ENCODE measurements at regions of chr2 and their contacts with region 1.

Region 1: DNA sequence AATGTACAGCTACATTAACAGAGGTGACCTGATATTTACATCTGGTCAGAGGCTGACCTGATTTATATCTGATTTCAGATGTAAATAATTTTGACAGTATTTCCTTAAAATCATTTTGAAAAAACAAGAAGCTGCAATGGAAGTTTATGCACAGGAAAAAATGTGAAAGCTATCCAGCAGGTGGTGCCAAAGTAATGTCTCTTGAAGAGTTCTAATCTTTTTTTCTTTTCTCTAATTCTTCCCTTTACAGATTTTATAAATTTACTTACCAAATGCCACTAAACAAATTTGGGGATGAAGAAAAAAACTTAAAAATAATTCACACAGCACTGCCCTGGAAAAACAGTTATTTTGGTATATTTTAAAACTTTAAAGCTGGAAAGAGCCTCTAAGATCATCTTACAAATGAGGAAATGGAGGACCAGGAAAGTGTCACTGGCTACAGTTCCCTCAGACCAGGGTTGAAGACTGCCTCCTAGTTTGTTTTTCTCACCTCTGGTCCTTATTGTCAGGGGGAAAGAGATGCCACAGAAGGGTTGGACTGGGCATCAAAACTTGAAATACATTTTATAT is 16.4 kb upstream of the FBLN7 start:
- DNase-seq: peak; percentile 69
- ATAC-seq: no peak
- H3K4me3 ChIP-seq: no peak overlapping the region
- H3K27ac ChIP-seq: no peak overlapping the region
- H3K4me1 ChIP-seq: no peaks in the 10 kb centered on the region
- H3K27me3 ChIP-seq: no peaks in the 10 kb centered on the region
- CTCF ChIP-seq: peak; percentile 82

Region 2: DNA sequence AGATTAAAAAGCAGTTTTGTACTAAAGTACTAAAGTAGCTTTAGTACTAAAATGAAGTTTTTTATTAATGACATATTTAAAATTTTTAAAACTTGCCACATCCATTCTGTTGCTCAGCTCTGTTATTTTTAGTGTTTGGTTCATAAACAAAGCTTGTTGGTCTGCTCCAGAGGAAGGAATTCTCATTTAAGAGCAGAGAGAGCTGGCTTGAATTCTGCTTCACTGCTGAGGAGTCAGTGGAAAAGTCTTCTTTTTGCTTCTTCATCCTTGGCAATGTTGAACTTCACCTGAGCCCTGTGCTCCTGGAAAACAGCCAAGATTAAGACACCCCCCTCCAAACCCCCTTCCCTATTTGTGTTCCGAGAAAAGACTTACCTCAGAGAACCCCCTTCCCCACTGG is 26.1 kb before region 1 on chr2:
- CTCF ChIA-PET with region 1: no interaction called
- POLR2A ChIA-PET with region 1: no interaction called
- intact Hi-C with region 1: loop called (anchors 2 kb)
- DNase-seq: no peak
- ATAC-seq: no peak
- H3K4me3 ChIP-seq: no peak overlapping the region
- H3K27ac ChIP-seq: no peak overlapping the region
- H3K4me1 ChIP-seq: peaks cover 10% of the 10 kb centered on the region
- H3K27me3 ChIP-seq: no peaks in the 10 kb centered on the region
- CTCF ChIP-seq: no peak

Region 3: DNA sequence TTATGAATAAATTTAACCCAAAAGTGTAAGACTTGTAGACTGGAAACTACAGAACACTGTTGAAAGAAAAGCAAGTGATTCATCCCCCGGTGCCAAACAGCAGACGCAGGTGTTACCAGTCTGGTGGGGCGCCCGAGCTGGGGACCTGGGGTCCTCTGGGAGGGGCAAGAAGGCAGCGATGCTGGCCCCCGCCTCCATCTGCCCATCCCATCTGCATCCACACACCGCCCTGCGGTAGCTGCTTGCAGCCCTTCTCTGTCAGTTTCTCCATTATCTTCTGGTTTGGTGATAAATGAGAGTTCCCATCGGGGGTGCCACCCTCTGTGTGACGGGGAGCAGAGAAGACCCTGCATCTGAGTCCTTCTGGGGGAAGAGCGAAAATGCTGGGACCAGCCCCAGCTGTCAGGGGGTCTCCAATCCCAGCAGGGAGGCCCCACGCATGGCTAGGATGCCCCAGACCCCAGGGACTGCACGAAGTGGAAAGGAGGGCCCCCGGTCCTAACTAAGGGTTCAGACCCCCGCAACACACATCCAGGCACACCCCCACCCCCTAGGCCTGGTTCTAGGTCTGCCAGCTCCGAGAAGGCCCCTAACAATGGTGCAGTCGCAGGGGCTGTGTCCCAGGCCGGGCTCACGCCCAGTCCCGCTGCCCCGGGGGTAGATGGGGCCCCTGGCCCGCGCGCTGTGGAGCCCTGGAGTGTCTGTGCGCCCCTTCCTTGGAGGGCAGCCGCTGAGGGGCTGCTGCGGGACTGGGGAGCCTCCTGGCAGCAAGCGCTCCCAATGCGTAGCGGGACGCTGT is 312.4 kb after region 1 on chr2:
- CTCF ChIA-PET with region 1: no interaction called
- POLR2A ChIA-PET with region 1: interaction called, 6 read pairs
- intact Hi-C with region 1: loop called (anchors 10 kb)
- DNase-seq: no peak
- ATAC-seq: no peak
- H3K4me3 ChIP-seq: no peak overlapping the region
- H3K27ac ChIP-seq: no peak overlapping the region
- H3K4me1 ChIP-seq: no peaks in the 10 kb centered on the region
- H3K27me3 ChIP-seq: no peaks in the 10 kb centered on the region
- CTCF ChIP-seq: no peak

Measured in PC-3 (cell line).